ENCODE measurements at regions of chr12 and their contacts with region 1.

Region 1: GRCh38 chr12:46933947-46934346 is 108.2 kb upstream of the SLC38A4 start:
- DNase-seq: no peak
- H3K4me3 ChIP-seq: no peak overlapping the region
- H3K27ac ChIP-seq: no peak overlapping the region
- H3K27me3 ChIP-seq: no peaks in the 10 kb centered on the region
- CTCF ChIP-seq: peak; percentile 65

Region 2: GRCh38 chr12:46921048-46921763 is 12.7 kb before region 1 on chr12:
- CTCF ChIA-PET with region 1: interaction called, 11 read pairs
- POLR2A ChIA-PET with region 1: no interaction called
- DNase-seq: no peak
- H3K4me3 ChIP-seq: no peak overlapping the region
- H3K27ac ChIP-seq: peak overlapping the region; percentile 49
- H3K27me3 ChIP-seq: no peaks in the 10 kb centered on the region
- CTCF ChIP-seq: no peak

Region 3: GRCh38 chr12:46983393-46984266 is 49.7 kb after region 1 on chr12:
- CTCF ChIA-PET with region 1: interaction called, 23 read pairs
- POLR2A ChIA-PET with region 1: no interaction called
- DNase-seq: peak; percentile 29
- H3K4me3 ChIP-seq: no peak overlapping the region
- H3K27ac ChIP-seq: no peak overlapping the region
- H3K27me3 ChIP-seq: no peaks in the 10 kb centered on the region
- CTCF ChIP-seq: peak; percentile 94

Region 4: GRCh38 chr12:47054659-47055058 is 120.7 kb after region 1 on chr12:
- CTCF ChIA-PET with region 1: no interaction called
- POLR2A ChIA-PET with region 1: no interaction called
- DNase-seq: no peak
- H3K4me3 ChIP-seq: no peak overlapping the region
- H3K27ac ChIP-seq: no peak overlapping the region
- H3K27me3 ChIP-seq: no peaks in the 10 kb centered on the region
- CTCF ChIP-seq: no peak